Activated CD4-positive, alpha-beta T cell treated with anti-CD3 and anti-CD28 coated beads, Interleukin-2, amount 10 ng/mL, durations not matched to agents 24 days and 14 days (primary cell): ENCODE measurements at regions of chr2 and their contacts with region 1.

Region 1: DNA sequence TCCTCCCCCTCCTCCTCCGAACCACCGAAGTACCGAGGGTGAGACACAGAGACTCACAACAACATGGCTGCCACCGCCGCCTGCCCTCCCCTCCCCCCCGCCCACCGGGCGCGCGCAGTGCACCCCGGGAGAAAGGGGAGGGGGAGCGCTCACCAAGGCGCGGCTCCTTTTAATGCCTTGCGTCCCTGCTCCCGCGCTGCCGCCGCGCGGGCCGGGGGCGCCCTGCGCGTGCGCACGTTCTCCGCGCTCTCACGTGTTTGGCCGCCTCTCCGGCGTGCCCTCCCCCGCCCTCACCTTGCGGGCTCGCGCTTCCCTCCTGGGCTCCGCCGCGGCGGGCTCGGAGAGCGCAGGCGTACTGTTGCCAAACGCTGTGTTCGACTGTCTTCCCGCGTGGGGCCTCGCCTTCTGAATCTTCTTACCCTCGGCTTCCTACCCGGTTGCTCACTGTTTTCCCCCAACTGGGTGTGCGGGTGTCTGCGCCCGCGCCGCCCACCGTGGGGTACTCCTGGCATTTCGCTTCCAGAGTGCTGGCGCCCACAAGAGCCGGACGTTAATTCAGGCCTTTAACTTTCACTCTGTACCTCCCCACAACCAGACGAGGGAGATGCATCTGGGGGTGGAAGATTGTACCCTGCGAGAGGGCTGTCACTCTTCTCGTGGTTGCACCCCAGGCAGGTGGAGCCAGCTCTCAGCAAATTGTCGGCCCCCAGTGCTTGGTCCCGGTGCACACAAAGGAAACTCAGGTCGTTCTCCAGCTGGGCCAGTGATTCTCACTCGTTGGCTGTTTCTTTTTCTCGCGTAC is at the start of gene PUM2:
- DNase-seq: peak; percentile 99
- H3K4me3 Mint-ChIP-seq: no peak within 1 kb of the TSS
- H3K27ac Mint-ChIP-seq: peak within 1 kb of the TSS; percentile 95
- H3K4me1 Mint-ChIP-seq: peaks cover 23% of the 10 kb centered on the region
- H3K27me3 Mint-ChIP-seq: no peaks in the 10 kb centered on the region
- total RNA-seq, gene PUM2: 122 and 130 TPM in 2 replicates

Region 2: DNA sequence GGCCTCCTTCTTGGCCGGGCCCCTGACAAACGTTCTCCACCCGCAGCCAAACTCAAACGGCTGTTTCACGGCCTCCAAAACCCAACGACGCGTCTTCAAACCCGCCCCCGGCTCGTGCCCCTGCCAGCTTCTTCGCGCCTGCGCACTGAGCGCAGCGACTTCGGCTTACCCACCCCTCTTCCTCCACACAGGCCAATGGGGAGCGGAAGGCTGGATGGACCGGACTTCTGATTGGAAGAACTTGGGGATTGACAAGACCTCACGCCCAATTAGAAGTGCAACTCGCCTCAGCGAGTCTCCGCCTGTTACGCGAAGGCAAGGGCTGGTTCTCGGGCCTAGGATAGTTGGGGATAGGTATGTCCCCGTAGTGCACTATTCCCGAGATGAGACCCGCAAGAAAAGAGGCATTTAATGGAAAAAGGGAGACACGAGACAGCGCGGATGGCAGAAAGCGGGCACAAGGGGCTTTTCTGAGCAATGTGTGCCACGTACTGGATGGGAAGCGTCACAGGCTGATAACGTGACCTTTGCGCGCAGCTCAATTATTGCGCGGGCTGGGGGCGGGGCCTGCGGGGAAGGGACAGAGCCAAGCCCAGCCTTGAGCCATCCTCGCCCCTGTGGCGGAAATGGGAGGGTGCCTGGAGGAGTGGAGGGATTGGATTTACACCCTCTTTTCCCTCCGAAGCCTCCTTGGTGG is 299.3 kb before region 1 on chr2 and contains the start of gene LAPTM4A:
- intact Hi-C with region 1: loop called (anchors 1 kb)
- DNase-seq: peak; percentile 99
- H3K4me3 Mint-ChIP-seq: no peak within 1 kb of the TSS
- H3K27ac Mint-ChIP-seq: no peak within 1 kb of the TSS
- H3K4me1 Mint-ChIP-seq: peaks cover 23% of the 10 kb centered on the region
- H3K27me3 Mint-ChIP-seq: peaks cover 22% of the 10 kb centered on the region
- total RNA-seq, gene LAPTM4A: 24.3 and 25.3 TPM in 2 replicates

Region 3: GRCh38 chr2:20326163-20326780 is 24.7 kb before region 1 on chr2:
- intact Hi-C with region 1: loop called (anchors 2 kb)
- DNase-seq: peak; percentile 84
- H3K4me3 Mint-ChIP-seq: no peak overlapping the region
- H3K27ac Mint-ChIP-seq: no peak overlapping the region
- H3K4me1 Mint-ChIP-seq: peaks cover 54% of the 10 kb centered on the region
- H3K27me3 Mint-ChIP-seq: no peaks in the 10 kb centered on the region

Region 4: GRCh38 chr2:20424300-20425290 is 73.6 kb after region 1 on chr2:
- intact Hi-C with region 1: loop called (anchors 5 kb)
- DNase-seq: peak; percentile 75
- H3K4me3 Mint-ChIP-seq: peak overlapping the region; percentile 7
- H3K27ac Mint-ChIP-seq: peak overlapping the region; percentile 76
- H3K4me1 Mint-ChIP-seq: peaks cover 30% of the 10 kb centered on the region
- H3K27me3 Mint-ChIP-seq: peaks cover 4% of the 10 kb centered on the region

Region 5: DNA sequence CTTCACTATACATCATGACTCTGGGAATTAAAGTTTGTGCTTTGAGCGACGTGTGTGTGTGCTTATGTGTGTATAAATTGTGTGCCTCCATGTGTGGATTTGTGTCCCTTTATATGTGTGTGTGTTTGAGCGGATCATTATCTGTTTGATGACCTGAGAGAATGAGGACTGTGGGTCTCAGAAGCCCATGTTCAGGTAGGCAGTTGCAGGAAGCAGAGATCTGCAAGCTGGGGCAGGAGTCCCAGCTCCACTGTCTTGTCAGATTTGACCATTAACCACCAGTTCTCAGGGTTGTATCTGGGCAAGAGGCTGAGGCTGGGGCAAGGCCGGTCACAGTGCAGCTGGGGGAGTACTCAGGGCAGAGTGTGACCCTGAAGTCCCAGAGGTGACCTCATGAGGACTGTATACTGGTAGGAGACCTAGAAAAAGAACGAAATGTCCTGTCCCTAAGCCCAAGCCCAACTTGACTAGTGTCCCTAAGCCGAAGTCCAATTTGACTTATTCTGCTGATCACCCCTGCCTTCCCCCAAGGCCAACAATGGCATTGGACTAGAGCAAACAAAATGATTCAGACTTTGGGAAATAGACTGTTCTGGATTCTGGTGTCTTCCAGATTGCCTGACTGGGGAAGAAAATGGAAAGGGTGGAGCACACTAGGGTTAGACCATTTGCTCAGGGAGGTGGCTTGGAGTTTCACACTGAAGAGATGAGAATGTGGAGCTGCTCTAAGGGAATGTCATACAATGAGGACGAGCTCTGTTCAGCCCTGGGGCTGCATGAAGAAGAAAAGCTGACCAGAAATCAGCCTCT is 124.0 kb after region 1 on chr2:
- intact Hi-C with region 1: no loop called
- DNase-seq: no peak
- H3K4me3 Mint-ChIP-seq: no peak overlapping the region
- H3K27ac Mint-ChIP-seq: no peak overlapping the region
- H3K4me1 Mint-ChIP-seq: peaks cover 2% of the 10 kb centered on the region
- H3K27me3 Mint-ChIP-seq: peaks cover 6% of the 10 kb centered on the region

Region 6: GRCh38 chr2:20822535-20823490 is 471.9 kb after region 1 on chr2 and contains the start of gene LDAH:
- intact Hi-C with region 1: loop called (anchors 10 kb)
- DNase-seq: peak; percentile 95
- H3K4me3 Mint-ChIP-seq: peak within 1 kb of the TSS; percentile 96
- H3K27ac Mint-ChIP-seq: peak within 1 kb of the TSS; percentile 99
- H3K4me1 Mint-ChIP-seq: peaks cover 25% of the 10 kb centered on the region
- H3K27me3 Mint-ChIP-seq: peaks cover 4% of the 10 kb centered on the region
- total RNA-seq, gene LDAH: 31.6 and 37.7 TPM in 2 replicates